ENCODE measurements at regions of chr9 and their contacts with region 1.

Region 1: DNA sequence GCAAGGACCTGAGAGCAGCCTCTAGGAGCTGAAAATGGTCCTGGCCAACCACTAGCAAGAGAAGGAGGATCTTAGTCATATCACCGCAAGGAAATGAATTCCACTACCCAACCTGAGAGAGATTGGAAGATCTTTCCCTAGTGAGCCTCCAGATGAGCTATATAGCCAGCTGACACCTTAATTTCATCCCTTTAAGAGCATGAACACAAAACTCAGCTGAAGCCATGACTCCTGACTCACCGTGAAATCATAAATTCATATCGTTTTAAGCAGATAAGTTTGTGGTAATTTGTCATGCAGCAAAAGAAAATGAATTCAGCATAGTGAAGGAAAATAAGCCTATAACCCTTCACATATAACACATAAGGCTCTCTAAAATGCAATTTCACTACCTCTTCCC is 23.5 kb downstream of the MAPKAP1 start:
- DNase-seq: no peak
- ATAC-seq: no peak
- H3K4me3 ChIP-seq: no peak overlapping the region
- H3K27ac ChIP-seq: no peak overlapping the region
- H3K4me1 ChIP-seq: peaks cover 19% of the 10 kb centered on the region; the same call in 1 of the 2 replicates
- H3K27me3 ChIP-seq: no peaks in the 10 kb centered on the region
- CTCF ChIP-seq: no peak
- EP300 ChIP-seq: no peak
- POLR2A ChIP-seq: no peak
- RAD21 ChIP-seq: no peak

Region 2: GRCh38 chr9:125694478-125694877 is 11.0 kb after region 1 on chr9:
- CTCF ChIA-PET with region 1: interaction called, 11 read pairs
- POLR2A ChIA-PET with region 1: interaction called, 11 read pairs
- RAD21 ChIA-PET with region 1: interaction called, 6 read pairs
- SMC1A ChIA-PET with region 1: interaction called, 40 read pairs
- in situ Hi-C with region 1: no loop called
- intact Hi-C with region 1: no loop called
- DNase-seq: no peak
- ATAC-seq: no peak
- H3K4me3 ChIP-seq: no peak overlapping the region
- H3K27ac ChIP-seq: no peak overlapping the region
- H3K4me1 ChIP-seq: peaks cover 3% of the 10 kb centered on the region; the same call in 1 of the 2 replicates
- H3K27me3 ChIP-seq: no peaks in the 10 kb centered on the region
- CTCF ChIP-seq: no peak
- EP300 ChIP-seq: no peak
- POLR2A ChIP-seq: no peak
- RAD21 ChIP-seq: no peak

Region 3: GRCh38 chr9:125700791-125701190 is 17.3 kb after region 1 on chr9:
- CTCF ChIA-PET with region 1: interaction called, 8 read pairs
- POLR2A ChIA-PET with region 1: interaction called, 11 read pairs
- RAD21 ChIA-PET with region 1: interaction called, 22 read pairs
- SMC1A ChIA-PET with region 1: interaction called, 40 read pairs
- in situ Hi-C with region 1: no loop called
- intact Hi-C with region 1: no loop called
- DNase-seq: peak; percentile 84
- ATAC-seq: peak; percentile 89
- H3K4me3 ChIP-seq: peak overlapping the region; percentile 46; the same call in 1 of the 2 replicates
- H3K27ac ChIP-seq: peak overlapping the region; percentile 68
- H3K4me1 ChIP-seq: peaks cover 22% of the 10 kb centered on the region
- H3K27me3 ChIP-seq: no peaks in the 10 kb centered on the region
- CTCF ChIP-seq: no peak
- EP300 ChIP-seq: peak; percentile 81 to 82; a peak in 2 of 4 replicates
- POLR2A ChIP-seq: no peak
- RAD21 ChIP-seq: no peak; the same call in 1 of the 2 replicates

Region 4: GRCh38 chr9:125706661-125707471 is 23.4 kb after region 1 on chr9 and contains the start of gene MAPKAP1:
- CTCF ChIA-PET with region 1: interaction called, 8 read pairs
- POLR2A ChIA-PET with region 1: interaction called, 11 read pairs
- RAD21 ChIA-PET with region 1: interaction called, 22 read pairs
- SMC1A ChIA-PET with region 1: interaction called, 5 read pairs
- in situ Hi-C with region 1: no loop called
- intact Hi-C with region 1: no loop called
- DNase-seq: peak; percentile 81
- ATAC-seq: peak; percentile 94
- H3K4me3 ChIP-seq: peak within 1 kb of the TSS; percentile 90
- H3K27ac ChIP-seq: peak within 1 kb of the TSS; percentile 69
- H3K4me1 ChIP-seq: peaks cover 17% of the 10 kb centered on the region
- H3K27me3 ChIP-seq: no peaks in the 10 kb centered on the region
- CTCF ChIP-seq: no peak
- EP300 ChIP-seq: no peak
- POLR2A ChIP-seq: peak; percentile 95
- RAD21 ChIP-seq: no peak
- polyA plus RNA-seq, gene MAPKAP1: 5.1 to 11.7 TPM

Measured in GM12878 (cell line).